ENCODE measurements at regions of chrX and their contacts with region 1.

Region 1: GRCh38 chrX:47144626-47145394 is at the starts of genes NDUFB11 and RBM10:
- DNase-seq: peak; percentile 70 to 80
- H3K4me3 ChIP-seq: peak within 1 kb of the TSS; percentile 74 to 97 (median 84)
- H3K27ac ChIP-seq: peak within 1 kb of the TSS; percentile 83
- H3K4me1 ChIP-seq: peaks cover 0 to 6% (median 2%) of the 10 kb centered on the region in 4 experiments; a peak in 4 of 7 replicates
- H3K27me3 ChIP-seq: no peaks in the 10 kb centered on the region
- CTCF ChIP-seq: peak; percentile 30 to 66 (median 39)
- EP300 ChIP-seq: no peak
- POLR2A ChIP-seq: peak; percentile 56 to 79
- RAD21 ChIP-seq: no peak
- total RNA-seq, gene NDUFB11: 120 and 127 TPM in 2 replicates
- total RNA-seq, gene RBM10: 64.0 and 69.8 TPM in 2 replicates

Region 2: GRCh38 chrX:47030339-47030738 is 114.5 kb before region 1 on chrX:
- CTCF ChIA-PET with region 1: no interaction called
- POLR2A ChIA-PET with region 1: no interaction called
- DNase-seq: no peak
- H3K4me3 ChIP-seq: no peak overlapping the region
- H3K27ac ChIP-seq: no peak overlapping the region
- H3K4me1 ChIP-seq: no peaks in the 10 kb centered on the region
- H3K27me3 ChIP-seq: no peaks in the 10 kb centered on the region
- CTCF ChIP-seq: peak in 2 of 3 experiments; percentile 17 to 38; a peak in 2 of 4 replicates
- EP300 ChIP-seq: no peak
- POLR2A ChIP-seq: no peak
- RAD21 ChIP-seq: peak; percentile 65

Region 3: DNA sequence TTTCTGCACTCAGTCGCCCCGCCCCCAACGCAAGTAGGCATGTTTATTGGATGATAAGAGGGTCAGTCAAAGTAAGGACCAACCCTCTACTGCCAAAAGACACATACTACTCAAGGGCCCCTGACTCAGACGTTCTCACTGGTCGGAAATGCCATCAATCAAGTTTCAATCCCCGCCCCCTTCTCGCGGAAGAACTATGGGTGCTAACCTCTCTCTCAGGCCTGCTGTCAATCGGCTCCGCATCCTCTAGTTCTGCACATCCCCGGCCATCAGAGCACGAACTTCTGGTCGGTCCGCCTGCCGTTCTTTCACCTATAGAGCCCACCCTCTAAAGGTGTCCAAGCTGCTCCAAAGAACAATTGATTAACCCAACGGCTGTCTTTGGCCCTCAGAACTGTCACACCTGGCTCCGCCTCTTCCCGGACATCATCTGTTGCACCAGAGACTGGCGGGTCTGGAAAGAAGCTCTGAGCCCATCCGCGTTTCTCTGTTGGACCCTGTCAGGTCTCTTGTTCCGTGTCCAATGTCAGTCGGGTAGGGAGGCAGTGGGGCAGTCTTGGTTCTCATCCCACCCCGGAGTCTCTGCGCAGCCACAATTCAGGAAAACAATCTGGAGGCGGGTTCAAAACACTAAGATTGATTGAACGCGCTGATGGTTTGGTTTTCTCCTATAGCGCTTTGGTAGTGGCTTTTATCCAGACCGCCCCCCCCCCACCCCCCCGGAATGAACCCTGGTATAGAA is 15.5 kb before region 1 on chrX:
- CTCF ChIA-PET with region 1: interaction called, 4 read pairs
- POLR2A ChIA-PET with region 1: interaction called, 28 read pairs
- DNase-seq: peak; percentile 76 to 93
- H3K4me3 ChIP-seq: peak overlapping the region; percentile 52 to 72 (median 61)
- H3K27ac ChIP-seq: no peak overlapping the region
- H3K4me1 ChIP-seq: no peaks in the 10 kb centered on the region
- H3K27me3 ChIP-seq: no peaks in the 10 kb centered on the region
- CTCF ChIP-seq: no peak
- EP300 ChIP-seq: no peak
- POLR2A ChIP-seq: no peak
- RAD21 ChIP-seq: no peak

Region 4: DNA sequence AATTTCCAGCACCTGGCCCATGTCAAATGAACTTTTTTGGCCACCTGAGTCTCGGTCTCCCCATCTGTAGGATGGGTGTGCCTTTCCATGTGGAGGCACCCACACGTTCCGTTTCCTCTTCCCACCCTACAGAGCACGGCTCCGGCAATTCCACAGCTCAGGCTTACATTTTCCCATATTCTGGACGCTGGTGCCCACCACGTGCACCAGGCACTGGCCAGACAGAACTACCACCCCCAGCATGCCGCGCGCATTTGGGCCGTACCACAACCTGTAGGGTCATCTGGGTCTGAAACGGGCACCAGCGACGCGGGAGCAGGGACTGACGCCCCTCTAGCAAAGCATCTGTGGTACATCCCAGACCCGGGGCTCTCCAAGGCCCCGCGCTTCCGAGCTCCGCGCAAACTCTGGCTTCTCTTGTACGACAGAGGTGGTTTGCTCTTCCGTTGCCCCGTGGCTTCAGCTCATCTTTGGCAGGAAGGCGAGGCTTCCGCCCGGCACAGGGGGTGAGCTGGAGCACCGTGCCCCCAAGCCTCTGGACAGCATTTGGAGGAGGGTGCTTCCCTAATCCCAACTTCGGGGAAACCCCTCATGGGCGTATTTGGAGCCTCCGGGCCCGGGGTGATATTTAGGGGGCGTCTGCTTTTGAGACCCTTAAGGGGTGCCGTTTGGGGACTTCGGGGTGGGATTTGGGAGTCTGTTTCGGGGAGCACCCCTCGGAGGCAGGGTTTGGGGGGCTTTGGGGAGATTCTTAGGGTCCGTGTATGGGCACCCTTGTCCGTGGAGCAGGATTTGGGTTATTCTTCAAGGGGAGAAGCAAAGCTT is 45.8 kb after region 1 on chrX:
- CTCF ChIA-PET with region 1: no interaction called
- POLR2A ChIA-PET with region 1: interaction called, 13 read pairs
- DNase-seq: peak; percentile 57 to 77
- H3K4me3 ChIP-seq: peak overlapping the region; percentile 40 to 86 (median 54)
- H3K27ac ChIP-seq: no peak overlapping the region
- H3K4me1 ChIP-seq: peaks cover 0 to 11% (median 5%) of the 10 kb centered on the region in 4 experiments; a peak in 6 of 7 replicates
- H3K27me3 ChIP-seq: no peaks in the 10 kb centered on the region
- CTCF ChIP-seq: no peak
- EP300 ChIP-seq: peak in 1 of 2 experiments; percentile 99; a peak in 2 of 3 replicates
- POLR2A ChIP-seq: peak in 1 of 2 experiments; percentile 67; a peak in 2 of 3 replicates
- RAD21 ChIP-seq: no peak

Region 5: GRCh38 chrX:47497273-47497672 is 352.5 kb after region 1 on chrX:
- CTCF ChIA-PET with region 1: no interaction called
- POLR2A ChIA-PET with region 1: no interaction called
- DNase-seq: no peak
- H3K4me3 ChIP-seq: no peak overlapping the region
- H3K27ac ChIP-seq: no peak overlapping the region
- H3K4me1 ChIP-seq: peaks cover 0 to 12% (median 7%) of the 10 kb centered on the region in 4 experiments; a peak in 3 of 7 replicates
- H3K27me3 ChIP-seq: no peaks in the 10 kb centered on the region
- CTCF ChIP-seq: peak in 1 of 3 experiments; percentile 38; a peak in 1 of 4 replicates
- EP300 ChIP-seq: no peak
- POLR2A ChIP-seq: no peak
- RAD21 ChIP-seq: peak; percentile 68 to 69